ENCODE measurements at regions of chr14 and their contacts with region 1.

Region 1: GRCh38 chr14:102900631-102901571 is 21.6 kb upstream of the AMN start:
- DNase-seq: peak in 6 of 14 experiments; percentile 16 to 37 (median 26)
- ATAC-seq: peak; percentile 91
- H3K4me3 ChIP-seq: no peak overlapping the region
- H3K4me3 Mint-ChIP-seq: peak overlapping the region; percentile 18
- H3K27ac ChIP-seq: peak overlapping the region; percentile 29 to 38
- H3K27ac Mint-ChIP-seq: peak overlapping the region; percentile 82
- H3K4me1 ChIP-seq: peaks cover 9% of the 10 kb centered on the region
- H3K4me1 Mint-ChIP-seq: peaks cover 11% of the 10 kb centered on the region
- H3K27me3 ChIP-seq: no peaks in the 10 kb centered on the region
- H3K27me3 Mint-ChIP-seq: no peaks in the 10 kb centered on the region
- CTCF ChIP-seq: no peak

Region 2: DNA sequence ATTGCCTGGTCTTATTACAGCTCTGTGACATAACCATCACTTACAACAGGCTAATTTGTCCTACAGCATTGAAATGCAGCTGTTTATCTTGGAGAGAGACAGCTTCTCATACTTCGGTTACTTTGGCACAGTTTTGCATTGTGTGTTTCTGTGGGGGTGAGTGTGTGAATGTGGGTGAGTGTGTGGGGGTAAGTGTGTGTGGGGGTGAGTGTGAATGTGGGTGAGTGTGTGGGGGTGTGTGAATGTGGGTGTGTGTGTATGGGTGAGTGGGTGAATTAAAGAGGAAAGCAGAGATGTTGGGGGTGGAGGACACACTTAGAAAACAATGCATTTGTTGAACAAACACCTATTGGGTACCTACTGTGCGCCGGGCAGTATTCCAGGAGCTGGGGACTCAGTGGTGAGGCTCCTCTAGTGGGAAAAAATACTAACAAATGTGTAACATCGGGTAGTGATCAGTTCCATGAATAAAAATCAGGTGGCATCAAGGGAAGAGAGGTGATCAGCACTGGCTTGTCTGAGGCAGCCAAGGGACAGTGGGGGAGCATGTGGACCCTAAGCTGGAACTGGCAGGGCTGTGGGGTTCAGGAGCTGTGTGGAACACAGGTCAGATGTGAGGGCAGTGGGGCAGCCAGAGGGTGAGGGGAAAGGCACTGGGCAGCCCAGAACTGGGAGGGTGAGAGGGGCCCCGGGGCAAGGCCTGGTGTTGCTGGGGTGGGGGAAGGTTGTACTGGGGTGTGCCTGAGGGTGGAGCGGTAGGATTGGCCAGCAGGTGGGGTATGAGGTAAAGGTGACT is 22.5 kb before region 1 on chr14:
- CTCF ChIA-PET with region 1: no interaction called
- POLR2A ChIA-PET with region 1: no interaction called
- intact Hi-C with region 1: no loop called
- DNase-seq: no peak
- ATAC-seq: no peak
- H3K4me3 ChIP-seq: no peak overlapping the region
- H3K4me3 Mint-ChIP-seq: no peak overlapping the region
- H3K27ac ChIP-seq: no peak overlapping the region
- H3K27ac Mint-ChIP-seq: no peak overlapping the region
- H3K4me1 ChIP-seq: no peaks in the 10 kb centered on the region
- H3K4me1 Mint-ChIP-seq: no peaks in the 10 kb centered on the region
- H3K27me3 ChIP-seq: no peaks in the 10 kb centered on the region
- H3K27me3 Mint-ChIP-seq: no peaks in the 10 kb centered on the region
- CTCF ChIP-seq: no peak

Region 3: GRCh38 chr14:102945346-102946130 is 44.6 kb after region 1 on chr14:
- CTCF ChIA-PET with region 1: no interaction called
- POLR2A ChIA-PET with region 1: interaction called, 8 read pairs
- intact Hi-C with region 1: loop called in 1 of 2 experiments (anchors 1 kb)
- DNase-seq: no peak
- ATAC-seq: no peak
- H3K4me3 ChIP-seq: no peak overlapping the region
- H3K4me3 Mint-ChIP-seq: no peak overlapping the region
- H3K27ac ChIP-seq: no peak overlapping the region
- H3K27ac Mint-ChIP-seq: no peak overlapping the region
- H3K4me1 ChIP-seq: peaks cover 38% of the 10 kb centered on the region
- H3K4me1 Mint-ChIP-seq: peaks cover 28% of the 10 kb centered on the region
- H3K27me3 ChIP-seq: no peaks in the 10 kb centered on the region
- H3K27me3 Mint-ChIP-seq: no peaks in the 10 kb centered on the region
- CTCF ChIP-seq: no peak

Region 4: DNA sequence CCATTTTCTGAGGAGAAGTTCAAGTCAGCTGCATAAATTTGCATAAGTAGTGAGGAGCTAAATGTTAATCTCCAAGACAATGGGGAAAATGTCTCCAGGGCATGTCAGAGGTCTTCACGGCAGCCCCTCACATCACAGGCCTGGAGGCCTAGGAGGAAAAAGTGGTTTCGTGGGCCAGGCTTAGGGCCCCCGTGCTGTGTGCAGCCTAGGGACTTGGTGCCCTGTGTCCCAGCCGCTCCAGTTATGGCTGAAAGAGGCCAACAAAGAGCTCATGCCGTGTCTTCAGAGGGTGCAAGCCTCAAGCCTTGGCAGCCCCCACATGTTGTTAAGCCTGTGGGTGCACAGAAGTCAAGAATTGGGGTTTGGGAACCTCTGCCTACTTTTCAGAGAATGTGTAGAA is 1083.3 kb after region 1 on chr14:
- CTCF ChIA-PET with region 1: no interaction called
- POLR2A ChIA-PET with region 1: no interaction called
- intact Hi-C with region 1: no loop called
- DNase-seq: no peak
- ATAC-seq: no peak
- H3K4me3 ChIP-seq: no peak overlapping the region
- H3K4me3 Mint-ChIP-seq: no peak overlapping the region
- H3K27ac ChIP-seq: no peak overlapping the region
- H3K27ac Mint-ChIP-seq: no peak overlapping the region
- H3K4me1 ChIP-seq: no peaks in the 10 kb centered on the region
- H3K4me1 Mint-ChIP-seq: no peaks in the 10 kb centered on the region
- H3K27me3 ChIP-seq: peaks cover 1% of the 10 kb centered on the region in 2 experiments
- H3K27me3 Mint-ChIP-seq: peaks cover 30% of the 10 kb centered on the region
- CTCF ChIP-seq: no peak